ENCODE measurements at regions of chr9 and their contacts with region 1.

Region 1: GRCh38 chr9:2181792-2182191 is 166.6 kb downstream of the SMARCA2 start:
- DNase-seq: peak in 1 of 2 experiments; percentile 80
- H3K4me3 ChIP-seq: peak overlapping the region in 2 of 4 experiments; percentile 10 to 45; a peak in 5 of 8 replicates
- H3K27ac ChIP-seq: peak overlapping the region; percentile 41
- H3K4me1 ChIP-seq: peaks cover 5 to 18% (median 16%) of the 10 kb centered on the region in 4 experiments; a peak in 6 of 7 replicates
- H3K27me3 ChIP-seq: no peaks in the 10 kb centered on the region
- CTCF ChIP-seq: peak; percentile 69 to 70 (median 70)
- EP300 ChIP-seq: no peak
- POLR2A ChIP-seq: no peak
- RAD21 ChIP-seq: peak; percentile 64 to 74

Region 2: DNA sequence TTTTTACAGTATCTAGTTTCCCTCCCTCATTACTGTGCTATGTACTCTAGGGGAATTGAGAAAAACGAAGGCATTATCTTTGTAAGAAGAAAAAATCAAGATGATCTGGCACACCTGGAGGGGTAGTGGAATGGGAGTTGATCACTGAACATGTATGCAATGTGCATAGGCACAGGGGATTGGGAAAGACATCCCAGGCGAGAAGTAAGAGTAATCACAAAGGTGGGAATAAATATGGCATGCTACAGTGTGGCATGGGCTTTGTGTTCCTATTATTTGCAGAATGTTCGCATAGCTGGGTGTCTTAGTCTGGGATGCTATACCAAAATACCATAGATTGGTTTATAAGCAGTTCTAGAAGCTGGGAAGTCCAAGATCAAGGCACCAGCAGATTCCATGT is 36.0 kb before region 1 on chr9:
- CTCF ChIA-PET with region 1: interaction called, 25 read pairs
- POLR2A ChIA-PET with region 1: interaction called, 3 read pairs
- DNase-seq: no peak
- H3K4me3 ChIP-seq: no peak overlapping the region
- H3K27ac ChIP-seq: no peak overlapping the region
- H3K4me1 ChIP-seq: no peaks in the 10 kb centered on the region
- H3K27me3 ChIP-seq: no peaks in the 10 kb centered on the region
- CTCF ChIP-seq: no peak
- EP300 ChIP-seq: no peak
- POLR2A ChIP-seq: no peak
- RAD21 ChIP-seq: no peak

Region 3: GRCh38 chr9:2159521-2160454 is 22.0 kb before region 1 on chr9:
- CTCF ChIA-PET with region 1: interaction called, 15 read pairs
- POLR2A ChIA-PET with region 1: interaction called, 6 read pairs
- DNase-seq: no peak
- H3K4me3 ChIP-seq: no peak overlapping the region
- H3K27ac ChIP-seq: peak overlapping the region; percentile 21; the same call in 1 of the 2 replicates
- H3K4me1 ChIP-seq: peaks cover 2 to 18% (median 16%) of the 10 kb centered on the region in 4 experiments
- H3K27me3 ChIP-seq: no peaks in the 10 kb centered on the region
- CTCF ChIP-seq: no peak
- EP300 ChIP-seq: no peak
- POLR2A ChIP-seq: no peak
- RAD21 ChIP-seq: no peak

Region 4: DNA sequence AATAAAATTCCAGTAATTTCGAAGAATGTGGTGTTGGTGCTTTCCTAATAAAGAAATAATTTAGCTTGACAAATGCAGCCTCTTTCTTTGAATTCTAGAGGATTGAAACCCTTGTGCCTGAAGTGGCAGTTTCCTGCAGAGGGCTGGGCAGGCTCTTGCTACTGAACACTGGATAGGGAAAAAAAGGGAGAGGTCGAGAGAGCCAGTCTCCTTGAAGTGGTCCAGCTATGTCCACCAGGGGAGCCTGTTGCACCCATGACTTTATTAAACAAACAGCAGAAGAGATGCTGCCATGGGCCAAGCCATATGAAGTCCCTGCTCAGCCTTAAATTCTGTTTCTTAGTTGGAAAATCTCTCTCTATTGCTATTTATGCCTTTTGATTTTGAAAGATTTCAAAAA is 11.8 kb after region 1 on chr9:
- CTCF ChIA-PET with region 1: interaction called, 21 read pairs
- POLR2A ChIA-PET with region 1: no interaction called
- DNase-seq: no peak
- H3K4me3 ChIP-seq: no peak overlapping the region
- H3K27ac ChIP-seq: no peak overlapping the region
- H3K4me1 ChIP-seq: peaks cover 0 to 2% (median 0%) of the 10 kb centered on the region in 4 experiments; a peak in 3 of 7 replicates
- H3K27me3 ChIP-seq: no peaks in the 10 kb centered on the region
- CTCF ChIP-seq: peak in 1 of 3 experiments; percentile 23; a peak in 1 of 4 replicates
- EP300 ChIP-seq: no peak
- POLR2A ChIP-seq: no peak
- RAD21 ChIP-seq: no peak; a peak in 2 of 4 replicates